KBM-7 (cell line): ENCODE measurements at regions of chr15 and their contacts with region 1.

Region 1: DNA sequence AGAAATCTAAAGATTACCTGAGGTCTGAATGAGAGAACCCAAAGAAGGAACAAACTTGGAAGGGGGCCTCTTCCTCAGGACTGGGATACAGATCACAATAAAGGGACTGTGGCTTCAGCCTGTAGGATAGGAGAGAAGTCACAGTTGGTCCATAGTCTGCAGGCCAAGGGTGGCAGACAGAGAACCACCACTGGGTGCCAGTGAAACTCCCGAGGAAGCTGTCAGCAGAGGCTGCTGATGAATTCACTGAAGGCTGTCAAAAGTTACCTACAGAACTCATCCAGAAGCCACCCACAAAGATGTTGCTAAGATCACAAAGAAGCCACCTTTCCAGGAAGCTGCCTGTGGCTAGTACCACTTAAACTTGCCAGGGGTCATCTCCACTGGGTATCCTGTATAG is 78.5 kb downstream of the TMCO5A start:
- DNase-seq: no peak

Region 2: GRCh38 chr15:38072348-38073177 is 59.7 kb after region 1 on chr15:
- in situ Hi-C with region 1: loop called (anchors 10 kb)
- DNase-seq: peak; percentile 58

Region 3: GRCh38 chr15:38207621-38208020 is 194.7 kb after region 1 on chr15:
- in situ Hi-C with region 1: no loop called
- DNase-seq: no peak